ENCODE measurements at regions of chr20 and their contacts with region 1.

Region 1: DNA sequence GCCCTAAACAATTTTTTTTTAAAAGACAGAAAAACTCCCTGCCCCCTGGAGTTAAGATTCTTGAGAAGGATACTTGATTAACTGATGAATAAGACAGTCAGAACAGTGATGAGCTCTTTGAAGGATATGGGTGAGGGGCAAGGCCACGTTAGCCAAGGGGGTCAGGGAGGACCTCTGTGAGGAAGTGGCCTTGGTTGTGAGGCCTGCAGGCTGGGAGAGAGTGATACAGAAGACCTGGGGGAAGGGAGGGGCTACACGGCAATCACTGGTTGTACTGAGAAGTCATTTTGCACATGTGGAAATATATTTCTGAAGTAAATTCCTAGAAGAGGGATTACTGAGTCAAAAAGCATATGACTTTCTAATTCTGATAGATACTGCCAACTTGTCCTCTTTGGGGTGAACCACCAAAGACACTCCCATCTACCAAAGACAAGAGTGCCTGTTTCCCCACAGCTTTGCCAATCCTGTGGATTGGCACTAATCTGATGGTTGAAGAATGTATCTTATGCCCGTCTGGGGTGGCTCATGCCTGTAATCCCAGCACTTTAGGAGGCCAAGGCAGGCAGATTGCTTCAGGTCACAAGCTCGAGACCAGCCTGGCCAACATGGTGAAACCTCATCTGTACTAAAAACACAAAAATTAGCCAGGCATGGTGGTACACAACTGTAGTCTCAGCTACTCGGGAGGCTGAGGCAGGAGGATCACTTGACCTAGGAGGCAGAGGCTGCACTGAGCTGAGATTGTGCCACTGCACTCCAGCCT is 22.3 kb upstream of the BCAS4 start:
- DNase-seq: no peak
- ATAC-seq: no peak
- H3K4me3 ChIP-seq: no peak overlapping the region
- H3K27ac ChIP-seq: no peak overlapping the region
- H3K4me1 ChIP-seq: no peaks in the 10 kb centered on the region
- H3K27me3 ChIP-seq: peaks cover 0 to 6% (median 0%) of the 10 kb centered on the region in 7 donors
- CTCF ChIP-seq: no peak

Region 2: DNA sequence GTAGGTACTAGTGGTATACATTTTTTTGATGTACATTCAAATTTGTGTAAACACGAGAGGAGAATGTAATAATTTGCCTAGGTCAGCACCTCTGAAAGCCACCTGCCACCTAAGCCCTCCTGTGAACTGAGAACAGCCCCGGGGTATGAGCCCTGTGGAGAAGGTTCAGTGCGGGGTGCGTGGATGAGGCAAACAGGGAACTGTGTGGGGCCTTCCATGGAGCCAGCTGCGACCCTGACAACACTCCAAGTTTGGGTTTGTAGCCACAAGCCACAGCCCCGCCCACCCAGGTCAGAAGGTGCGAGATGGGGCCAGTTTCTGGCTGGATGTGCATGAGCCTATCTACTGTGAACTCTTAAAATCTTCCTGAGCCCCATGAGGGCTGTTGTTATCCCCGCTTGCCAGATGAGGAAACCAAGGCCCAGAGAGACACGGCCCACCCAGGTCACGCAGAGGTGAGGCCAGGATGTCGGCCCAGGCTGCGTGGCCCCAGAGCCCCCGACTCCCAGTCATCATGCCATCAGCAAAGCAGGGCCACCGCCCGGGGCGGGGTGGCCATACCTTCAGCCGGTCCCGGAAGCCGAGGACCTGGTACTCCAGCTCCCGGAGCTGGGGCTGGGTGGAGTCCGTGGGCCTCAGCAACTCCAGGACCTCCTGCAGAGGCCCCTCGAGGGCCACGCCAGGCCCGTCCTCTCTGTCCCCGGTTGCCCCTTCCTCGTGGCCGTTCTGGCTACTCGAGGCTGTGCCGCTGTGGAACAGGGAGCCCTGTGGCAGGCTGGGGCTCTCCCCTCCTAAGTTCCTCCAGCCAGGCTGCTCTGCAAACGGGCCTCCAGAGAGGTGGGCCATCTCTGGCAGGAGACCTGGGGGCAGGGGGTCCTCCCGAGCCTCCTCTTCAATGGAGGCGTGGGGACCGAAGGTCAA is 170.8 kb before region 1 on chr20:
- intact Hi-C with region 1: no loop called
- DNase-seq: no peak
- ATAC-seq: peak in 3 of 8 donors; percentile 12 to 21 (median 12)
- H3K4me3 ChIP-seq: no peak overlapping the region
- H3K27ac ChIP-seq: no peak overlapping the region
- H3K4me1 ChIP-seq: peaks cover 0 to 2% (median 0%) of the 10 kb centered on the region in 9 donors
- H3K27me3 ChIP-seq: peaks cover 0 to 33% (median 0%) of the 10 kb centered on the region in 7 donors
- CTCF ChIP-seq: no peak

Region 3: DNA sequence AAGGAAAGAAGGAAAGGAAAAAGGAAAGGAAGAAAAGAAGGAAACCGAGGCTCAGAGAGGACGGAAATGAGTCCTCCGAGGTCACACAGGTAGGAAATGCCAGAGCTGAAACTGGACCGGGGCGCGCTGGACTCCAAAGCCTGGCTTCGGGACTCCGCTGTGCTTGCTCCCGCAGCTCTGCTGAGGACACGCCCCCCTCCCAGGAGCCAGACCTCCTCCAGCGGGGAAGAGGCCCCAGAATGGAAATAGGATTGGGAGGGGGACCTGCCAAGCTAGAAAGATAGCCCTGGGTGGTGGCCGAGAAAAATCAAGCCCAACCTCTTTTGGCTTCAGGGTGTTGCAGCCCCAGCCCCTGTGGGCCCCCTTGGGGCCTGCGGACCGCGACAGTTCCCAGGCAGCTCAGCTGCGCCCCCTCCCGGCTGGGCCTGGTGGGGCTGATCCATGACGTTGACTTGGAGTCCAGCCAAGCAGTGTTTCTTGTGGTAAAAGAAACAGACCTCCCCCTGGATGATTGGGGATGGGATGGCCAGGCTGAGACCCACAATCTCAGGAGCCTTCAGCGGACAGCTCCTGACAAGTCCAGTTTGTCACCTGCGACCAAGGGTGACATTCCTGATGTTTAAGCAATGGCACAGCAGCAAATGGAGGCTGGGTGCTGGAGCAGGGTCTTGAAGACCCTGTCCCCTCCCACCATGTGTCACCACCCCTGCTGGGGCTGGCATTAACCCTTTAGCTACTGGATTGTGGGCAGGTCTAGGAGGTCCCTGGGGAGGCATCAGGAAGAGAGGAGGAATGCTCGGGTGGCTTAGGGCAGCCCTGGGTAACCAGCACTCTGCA is 136.7 kb before region 1 on chr20:
- intact Hi-C with region 1: loop called in 1 of 10 experiments (anchors 2 kb)
- DNase-seq: peak; percentile 74 to 82
- ATAC-seq: peak; percentile 72 to 86 (median 82)
- H3K4me3 ChIP-seq: peak overlapping the region in 6 of 10 donors; percentile 11 to 31 (median 20)
- H3K27ac ChIP-seq: peak overlapping the region in 8 of 10 donors; percentile 15 to 68 (median 62)
- H3K4me1 ChIP-seq: peaks cover 5 to 30% (median 17%) of the 10 kb centered on the region in 9 donors
- H3K27me3 ChIP-seq: no peaks in the 10 kb centered on the region
- CTCF ChIP-seq: peak; percentile 69 to 93 (median 88)

Region 4: GRCh38 chr20:50815162-50815989 is 42.8 kb after region 1 on chr20:
- intact Hi-C with region 1: no loop called
- DNase-seq: no peak
- ATAC-seq: peak in 1 of 8 donors; percentile 43
- H3K4me3 ChIP-seq: no peak overlapping the region
- H3K27ac ChIP-seq: no peak overlapping the region
- H3K4me1 ChIP-seq: peaks cover 0 to 10% (median 2%) of the 10 kb centered on the region in 9 donors
- H3K27me3 ChIP-seq: no peaks in the 10 kb centered on the region
- CTCF ChIP-seq: no peak